Activated CD4-positive, alpha-beta T cell treated with anti-CD3 and anti-CD28 coated beads, Interleukin-2, amount 10 ng/mL, durations not matched to agents 7 days and 5 days (primary cell): ENCODE measurements at regions of chr20 and their contacts with region 1.

Region 1: GRCh38 chr20:33061658-33062028 is 7.9 kb downstream of the BPIFB3 start:
- DNase-seq: no peak
- H3K4me3 Mint-ChIP-seq: no peak overlapping the region
- H3K27ac Mint-ChIP-seq: no peak overlapping the region
- H3K4me1 Mint-ChIP-seq: no peaks in the 10 kb centered on the region
- H3K27me3 Mint-ChIP-seq: no peaks in the 10 kb centered on the region

Region 2: DNA sequence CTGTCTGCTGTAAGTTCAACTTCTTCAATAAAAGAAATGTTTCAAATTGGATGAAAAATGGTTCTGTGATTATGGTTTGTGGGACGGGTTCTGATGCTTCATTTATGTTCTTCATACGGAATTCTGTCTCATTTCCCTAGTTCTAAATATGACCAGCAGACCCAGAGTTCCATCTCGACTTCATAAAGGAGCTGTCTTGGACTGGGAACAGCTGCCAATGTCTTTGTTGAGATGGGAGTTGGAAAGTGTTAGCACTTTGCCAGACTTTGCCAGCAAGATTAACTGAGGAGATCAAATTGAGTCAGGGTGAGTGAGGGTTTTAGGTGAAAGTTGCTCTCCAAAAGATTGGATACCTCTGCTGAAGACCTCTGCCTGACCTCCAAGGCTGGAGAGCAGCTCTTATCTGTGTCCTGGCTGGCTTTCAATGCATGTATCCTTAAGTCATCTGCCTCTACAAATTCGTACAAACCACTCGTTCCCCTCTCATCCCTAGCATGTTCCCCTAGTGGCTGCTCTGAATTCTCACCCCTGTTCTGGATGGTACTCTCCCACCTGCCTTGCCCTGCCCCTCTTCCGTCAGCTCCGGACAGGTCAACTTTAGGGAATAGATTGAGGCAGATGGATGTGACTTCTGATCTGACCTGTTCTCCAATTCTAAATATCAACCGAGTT is 202.8 kb before region 1 on chr20 and contains the start of gene EFCAB8:
- CTCF ChIA-PET with region 1: no interaction called
- POLR2A ChIA-PET with region 1: interaction called, 10 read pairs
- DNase-seq: no peak
- H3K4me3 Mint-ChIP-seq: no peak within 1 kb of the TSS
- H3K27ac Mint-ChIP-seq: no peak within 1 kb of the TSS
- H3K4me1 Mint-ChIP-seq: peaks cover 18% of the 10 kb centered on the region
- H3K27me3 Mint-ChIP-seq: no peaks in the 10 kb centered on the region
- total RNA-seq, gene EFCAB8: 0.94 to 1.2 TPM

Region 3: DNA sequence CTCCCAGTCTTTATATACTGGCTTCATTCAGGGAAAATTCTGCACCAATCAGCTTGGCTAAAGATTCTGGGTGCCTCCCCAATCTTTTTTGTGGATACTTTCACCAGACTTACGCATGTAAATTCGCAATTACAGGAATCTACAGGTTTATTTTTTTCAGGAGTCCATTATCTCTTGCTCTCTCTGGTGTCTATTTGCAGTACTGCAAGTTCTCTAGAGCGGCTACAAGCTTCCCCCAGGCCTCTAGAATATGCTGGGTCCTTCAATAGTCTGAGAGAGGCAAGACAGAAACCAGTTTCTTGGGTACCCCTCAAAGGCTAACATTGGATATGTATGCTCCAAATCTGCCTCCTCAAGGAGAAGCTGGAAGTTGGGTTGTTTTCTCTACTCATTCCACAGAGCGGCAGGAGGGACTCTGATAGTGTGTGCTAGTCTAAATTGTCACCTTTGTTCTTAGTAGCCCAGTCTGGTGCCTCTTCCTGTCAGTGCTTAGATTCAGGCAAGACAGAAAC is 115.9 kb before region 1 on chr20:
- CTCF ChIA-PET with region 1: no interaction called
- POLR2A ChIA-PET with region 1: no interaction called
- DNase-seq: peak; percentile 48
- H3K4me3 Mint-ChIP-seq: no peak overlapping the region
- H3K27ac Mint-ChIP-seq: peak overlapping the region; percentile 87
- H3K4me1 Mint-ChIP-seq: peaks cover 36% of the 10 kb centered on the region
- H3K27me3 Mint-ChIP-seq: no peaks in the 10 kb centered on the region